Dendritic cell treated with granulocyte-macrophage colony-stimulating factor and Interleukin-4, amounts not matched to agents 40 ng/mL and 50 ng/mL, for 4 days (primary cell): ENCODE measurements at regions of chr1 and their contacts with region 1.

Region 1: GRCh38 chr1:247210376-247211117 is 38.7 kb upstream of the ZNF124 start:
- H3K4me3 Mint-ChIP-seq: peak overlapping the region; percentile 92
- H3K27ac Mint-ChIP-seq: peak overlapping the region; percentile 97
- H3K4me1 Mint-ChIP-seq: peaks cover 31% of the 10 kb centered on the region
- H3K27me3 Mint-ChIP-seq: no peaks in the 10 kb centered on the region

Region 2: GRCh38 chr1:246641394-246641793 is 569.2 kb before region 1 on chr1:
- intact Hi-C with region 1: no loop called
- H3K4me3 Mint-ChIP-seq: no peak overlapping the region
- H3K27ac Mint-ChIP-seq: no peak overlapping the region
- H3K4me1 Mint-ChIP-seq: no peaks in the 10 kb centered on the region
- H3K27me3 Mint-ChIP-seq: no peaks in the 10 kb centered on the region

Region 3: GRCh38 chr1:247103859-247104591 is 106.5 kb before region 1 on chr1 and contains the start of gene ZNF669:
- intact Hi-C with region 1: loop called (anchors 10 kb)
- H3K4me3 Mint-ChIP-seq: peak within 1 kb of the TSS; percentile 95
- H3K27ac Mint-ChIP-seq: peak within 1 kb of the TSS; percentile 87
- H3K4me1 Mint-ChIP-seq: no peaks in the 10 kb centered on the region
- H3K27me3 Mint-ChIP-seq: peaks cover 31% of the 10 kb centered on the region

Region 4: GRCh38 chr1:247172996-247173395 is 37.6 kb before region 1 on chr1:
- intact Hi-C with region 1: no loop called
- H3K4me3 Mint-ChIP-seq: no peak overlapping the region
- H3K27ac Mint-ChIP-seq: peak overlapping the region; percentile 83
- H3K4me1 Mint-ChIP-seq: peaks cover 40% of the 10 kb centered on the region
- H3K27me3 Mint-ChIP-seq: no peaks in the 10 kb centered on the region

Region 5: GRCh38 chr1:247331172-247331991 is 120.8 kb after region 1 on chr1 and contains the start of gene ZNF496:
- intact Hi-C with region 1: loop called (anchors 2 kb)
- H3K4me3 Mint-ChIP-seq: peak within 1 kb of the TSS; percentile 85
- H3K27ac Mint-ChIP-seq: peak within 1 kb of the TSS; percentile 85
- H3K4me1 Mint-ChIP-seq: peaks cover 62% of the 10 kb centered on the region
- H3K27me3 Mint-ChIP-seq: peaks cover 24% of the 10 kb centered on the region